Endothelial cell of umbilical vein (primary cell): ENCODE measurements at regions of chr11 and their contacts with region 1.

Region 1: GRCh38 chr11:2151500-2152257 is 9.3 kb downstream of the INS start:
- DNase-seq: peak; percentile 74
- H3K4me3 ChIP-seq: no peak overlapping the region
- H3K27ac ChIP-seq: no peak overlapping the region
- H3K4me1 ChIP-seq: no peaks in the 10 kb centered on the region
- H3K27me3 ChIP-seq: peaks cover 13 to 16% of the 10 kb centered on the region in 2 experiments
- CTCF ChIP-seq: peak; percentile 59 to 73
- POLR2A ChIP-seq: no peak

Region 2: GRCh38 chr11:1837171-1838076 is 314.3 kb before region 1 on chr11:
- CTCF ChIA-PET with region 1: interaction called, 41 read pairs
- POLR2A ChIA-PET with region 1: no interaction called
- dilution Hi-C with region 1: no loop called
- intact Hi-C with region 1: loop called (anchors 1 kb)
- DNase-seq: peak; percentile 19
- H3K4me3 ChIP-seq: no peak overlapping the region
- H3K27ac ChIP-seq: no peak overlapping the region
- H3K4me1 ChIP-seq: no peaks in the 10 kb centered on the region
- H3K27me3 ChIP-seq: no peaks in the 10 kb centered on the region
- CTCF ChIP-seq: peak; percentile 67 to 92
- POLR2A ChIP-seq: no peak

Region 3: GRCh38 chr11:1917671-1918516 is 233.8 kb before region 1 on chr11:
- CTCF ChIA-PET with region 1: interaction called, 10 read pairs
- POLR2A ChIA-PET with region 1: no interaction called
- dilution Hi-C with region 1: no loop called
- intact Hi-C with region 1: no loop called
- DNase-seq: no peak
- H3K4me3 ChIP-seq: no peak overlapping the region
- H3K27ac ChIP-seq: no peak overlapping the region
- H3K4me1 ChIP-seq: no peaks in the 10 kb centered on the region
- H3K27me3 ChIP-seq: no peaks in the 10 kb centered on the region
- CTCF ChIP-seq: peak; percentile 17 to 42
- POLR2A ChIP-seq: no peak

Region 4: GRCh38 chr11:1968454-1969002 is 183.2 kb before region 1 on chr11:
- CTCF ChIA-PET with region 1: interaction called, 24 read pairs
- POLR2A ChIA-PET with region 1: no interaction called
- dilution Hi-C with region 1: no loop called
- intact Hi-C with region 1: no loop called
- DNase-seq: no peak
- H3K4me3 ChIP-seq: no peak overlapping the region
- H3K27ac ChIP-seq: no peak overlapping the region
- H3K4me1 ChIP-seq: no peaks in the 10 kb centered on the region
- H3K27me3 ChIP-seq: no peaks in the 10 kb centered on the region
- CTCF ChIP-seq: no peak
- POLR2A ChIP-seq: no peak

Region 5: GRCh38 chr11:2077061-2077802 is 74.4 kb before region 1 on chr11:
- CTCF ChIA-PET with region 1: interaction called, 15 read pairs
- POLR2A ChIA-PET with region 1: no interaction called
- dilution Hi-C with region 1: no loop called
- intact Hi-C with region 1: no loop called
- DNase-seq: peak; percentile 86
- H3K4me3 ChIP-seq: no peak overlapping the region
- H3K27ac ChIP-seq: peak overlapping the region; percentile 80
- H3K4me1 ChIP-seq: peaks cover 17% of the 10 kb centered on the region
- H3K27me3 ChIP-seq: no peaks in the 10 kb centered on the region
- CTCF ChIP-seq: no peak
- POLR2A ChIP-seq: no peak

Region 6: GRCh38 chr11:2137202-2138071 is 14.2 kb before region 1 on chr11:
- CTCF ChIA-PET with region 1: interaction called, 64 read pairs
- POLR2A ChIA-PET with region 1: no interaction called
- dilution Hi-C with region 1: no loop called
- intact Hi-C with region 1: no loop called
- DNase-seq: peak; percentile 60
- H3K4me3 ChIP-seq: peak overlapping the region in 1 of 3 experiments; percentile 14
- H3K27ac ChIP-seq: no peak overlapping the region
- H3K4me1 ChIP-seq: peaks cover 3% of the 10 kb centered on the region
- H3K27me3 ChIP-seq: peaks cover 15 to 39% of the 10 kb centered on the region in 2 experiments
- CTCF ChIP-seq: no peak
- POLR2A ChIP-seq: no peak

Region 7: GRCh38 chr11:2186669-2187279 is 35.1 kb after region 1 on chr11:
- CTCF ChIA-PET with region 1: no interaction called
- POLR2A ChIA-PET with region 1: no interaction called
- dilution Hi-C with region 1: no loop called
- intact Hi-C with region 1: no loop called
- DNase-seq: peak; percentile 11
- H3K4me3 ChIP-seq: no peak overlapping the region
- H3K27ac ChIP-seq: no peak overlapping the region
- H3K4me1 ChIP-seq: no peaks in the 10 kb centered on the region
- H3K27me3 ChIP-seq: peaks cover 0 to 6% of the 10 kb centered on the region in 2 experiments
- CTCF ChIP-seq: peak; percentile 6 to 49
- POLR2A ChIP-seq: no peak